ENCODE measurements at regions of chr1 and their contacts with region 1.

Region 1: DNA sequence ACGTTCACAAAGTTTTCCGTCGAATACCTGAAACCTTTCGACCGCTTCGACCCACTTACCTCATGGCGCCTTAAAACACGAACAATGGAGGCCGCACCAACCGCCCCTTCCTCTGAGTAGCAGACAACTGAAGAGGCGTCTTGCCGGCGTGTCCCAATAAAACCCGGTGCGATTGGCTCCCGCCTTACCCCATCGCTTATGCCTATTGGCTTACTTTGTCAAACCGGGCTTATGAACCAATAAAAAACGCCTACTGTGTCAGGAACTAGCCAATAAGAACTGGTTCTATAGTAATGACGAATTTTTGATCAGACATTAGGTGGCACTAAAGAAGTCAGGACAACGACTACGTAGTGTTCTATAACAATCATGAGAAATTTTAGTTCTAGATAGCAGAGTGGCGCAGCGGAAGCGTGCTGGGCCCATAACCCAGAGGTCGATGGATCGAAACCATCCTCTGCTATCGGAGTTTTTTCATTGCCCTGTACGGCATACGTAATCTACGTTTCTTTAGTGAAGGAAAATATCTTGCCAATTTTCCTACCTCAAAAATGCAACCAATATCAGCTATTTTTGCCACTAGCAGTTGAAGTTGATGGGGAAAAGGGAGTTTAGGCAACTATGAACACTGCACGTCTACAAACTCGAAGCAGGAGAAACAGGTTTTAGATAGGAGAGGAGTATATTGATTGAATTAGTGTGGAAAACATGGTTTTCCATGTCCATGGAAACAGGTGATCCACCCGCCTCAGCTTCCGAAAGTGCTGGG is at the start of gene ILF2:
- DNase-seq: peak; percentile 98
- H3K4me3 ChIP-seq: peak within 1 kb of the TSS; percentile 90 to 97
- H3K27ac ChIP-seq: peak within 1 kb of the TSS; percentile 93 to 97
- H3K4me1 ChIP-seq: peaks cover 7 to 9% of the 10 kb centered on the region in 2 donors
- H3K27me3 ChIP-seq: no peaks in the 10 kb centered on the region
- CTCF ChIP-seq: peak in 1 of 4 experiments; percentile 15
- POLR2A ChIP-seq: peak; percentile 87 to 90
- total RNA-seq, gene ILF2: 82.7 to 252 (median 111) TPM

Region 2: GRCh38 chr1:153990468-153991150 is 319.6 kb after region 1 on chr1 and contains the start of gene RPS27:
- intact Hi-C with region 1: loop called (anchors 10 kb)
- DNase-seq: peak; percentile 87 to 96
- H3K4me3 ChIP-seq: peak within 1 kb of the TSS; percentile 74 to 99
- H3K27ac ChIP-seq: peak within 1 kb of the TSS; percentile 94 to 99
- H3K4me1 ChIP-seq: peaks cover 0 to 16% of the 10 kb centered on the region in 2 donors
- H3K27me3 ChIP-seq: no peaks in the 10 kb centered on the region
- CTCF ChIP-seq: peak in 2 of 4 experiments; percentile 30 to 33
- POLR2A ChIP-seq: peak; percentile 94 to 98
- total RNA-seq, gene RPS27: 826 to 6,388 (median 2,664) TPM